Gastrocnemius medialis (tissue), 4 donors: ENCODE measurements at regions of chr3 and their contacts with region 1.

Region 1: GRCh38 chr3:120182724-120183524 is 88.7 kb upstream of the GSK3B start:
- DNase-seq: no peak
- ATAC-seq: peak in 1 of 2 donors; percentile 47
- H3K4me3 ChIP-seq: no peak overlapping the region
- H3K27ac ChIP-seq: no peak overlapping the region
- H3K4me1 ChIP-seq: no peaks in the 10 kb centered on the region
- H3K27me3 ChIP-seq: no peaks in the 10 kb centered on the region
- CTCF ChIP-seq: peak in 1 of 5 experiments; percentile 29
- POLR2A ChIP-seq: no peak

Region 2: DNA sequence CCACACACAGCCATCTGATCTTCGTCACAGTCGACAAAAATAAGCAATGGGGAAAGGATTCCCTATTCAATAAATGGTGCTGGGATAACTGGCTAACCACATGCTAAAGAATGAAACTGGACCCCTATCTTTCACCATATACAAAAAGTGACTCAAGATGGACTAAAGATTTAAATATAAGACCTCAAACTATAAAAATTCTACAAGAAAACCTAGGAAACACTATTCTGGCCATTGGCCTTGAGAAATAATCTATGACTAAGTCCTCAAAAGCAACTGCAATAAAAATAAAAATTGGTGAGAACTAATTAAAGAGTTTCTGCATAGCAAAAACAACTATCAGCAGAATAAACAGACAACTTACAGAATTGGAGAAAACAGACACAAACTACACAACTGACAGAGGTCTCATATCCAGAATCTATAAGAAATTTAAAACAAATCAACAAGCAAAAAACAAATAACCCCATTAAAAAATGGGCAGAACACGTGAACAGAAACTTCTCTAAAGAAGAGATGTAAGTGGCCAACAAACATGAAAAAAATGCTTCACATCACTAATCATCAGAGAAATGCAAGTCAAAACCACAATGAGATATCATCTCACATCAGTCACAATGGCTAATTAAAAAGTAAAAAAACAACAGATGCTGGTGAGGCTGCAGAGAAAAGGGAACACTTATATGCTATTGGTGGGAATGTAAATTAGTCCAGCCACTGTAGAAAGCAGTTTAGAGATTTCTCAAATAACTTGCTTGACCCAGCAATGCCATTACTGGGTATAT is 297.0 kb before region 1 on chr3:
- in situ Hi-C with region 1: loop called (anchors 5 to 25 kb)
- intact Hi-C with region 1: loop called (anchors 5 kb)
- DNase-seq: no peak
- ATAC-seq: no peak
- H3K4me3 ChIP-seq: no peak overlapping the region
- H3K27ac ChIP-seq: no peak overlapping the region
- H3K4me1 ChIP-seq: no peaks in the 10 kb centered on the region
- H3K27me3 ChIP-seq: no peaks in the 10 kb centered on the region
- CTCF ChIP-seq: no peak
- POLR2A ChIP-seq: no peak